ENCODE measurements at regions of chr12 and their contacts with region 1.

Region 1: DNA sequence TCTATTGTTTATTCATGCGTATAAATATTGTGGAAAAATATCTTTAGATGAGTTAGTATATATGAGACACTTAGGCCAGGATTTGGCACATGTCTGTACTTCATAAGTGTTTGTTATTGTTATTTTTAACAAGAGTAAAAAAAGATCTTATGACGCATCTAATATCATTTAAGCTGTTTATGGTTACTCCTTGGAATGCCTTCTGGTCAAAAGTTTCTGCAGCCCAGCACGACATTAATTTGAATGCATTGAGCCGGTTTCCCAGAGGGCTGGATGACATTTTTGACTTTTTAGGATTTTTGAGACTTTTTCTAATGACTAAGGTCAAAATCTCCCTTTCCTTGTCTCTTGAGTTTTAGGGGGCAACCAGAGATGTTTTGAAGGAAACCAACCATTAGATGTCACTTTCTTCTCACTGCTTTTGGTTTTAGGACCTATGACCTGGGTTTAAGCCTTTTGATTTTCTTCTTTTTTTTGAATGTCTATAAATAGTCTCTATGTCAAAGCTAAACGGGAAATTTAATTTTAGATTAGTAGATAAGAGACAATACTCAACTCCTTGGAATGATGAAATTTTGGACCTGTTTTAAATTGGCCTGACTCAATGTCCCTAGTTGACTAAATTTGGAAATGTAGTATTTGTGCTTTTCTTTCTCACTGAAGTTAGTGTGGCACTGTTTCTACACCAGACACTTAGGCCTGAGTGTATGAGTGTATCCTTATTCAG is 215.5 kb downstream of the AEBP2 start:
- DNase-seq: no peak
- H3K4me3 ChIP-seq: no peak overlapping the region
- H3K27ac ChIP-seq: no peak overlapping the region
- H3K4me1 ChIP-seq: no peaks in the 10 kb centered on the region
- H3K27me3 ChIP-seq: no peaks in the 10 kb centered on the region
- CTCF ChIP-seq: no peak
- POLR2A ChIP-seq: no peak

Region 2: GRCh38 chr12:19066475-19067001 is 588.3 kb before region 1 on chr12:
- intact Hi-C with region 1: loop called (anchors 5 kb)
- DNase-seq: no peak
- H3K4me3 ChIP-seq: no peak overlapping the region
- H3K27ac ChIP-seq: no peak overlapping the region
- H3K4me1 ChIP-seq: no peaks in the 10 kb centered on the region
- H3K27me3 ChIP-seq: no peaks in the 10 kb centered on the region
- CTCF ChIP-seq: no peak
- POLR2A ChIP-seq: no peak

Region 3: GRCh38 chr12:20055856-20056255 is 401.0 kb after region 1 on chr12:
- intact Hi-C with region 1: no loop called
- DNase-seq: no peak
- H3K4me3 ChIP-seq: no peak overlapping the region
- H3K27ac ChIP-seq: no peak overlapping the region
- H3K4me1 ChIP-seq: no peaks in the 10 kb centered on the region
- H3K27me3 ChIP-seq: no peaks in the 10 kb centered on the region
- CTCF ChIP-seq: no peak
- POLR2A ChIP-seq: no peak